KBM-7 (cell line): ENCODE measurements at regions of chr18 and their contacts with region 1.

Region 1: GRCh38 chr18:8654503-8655451 is 45.5 kb downstream of the RAB12 start:
- DNase-seq: peak; percentile 41

Region 2: DNA sequence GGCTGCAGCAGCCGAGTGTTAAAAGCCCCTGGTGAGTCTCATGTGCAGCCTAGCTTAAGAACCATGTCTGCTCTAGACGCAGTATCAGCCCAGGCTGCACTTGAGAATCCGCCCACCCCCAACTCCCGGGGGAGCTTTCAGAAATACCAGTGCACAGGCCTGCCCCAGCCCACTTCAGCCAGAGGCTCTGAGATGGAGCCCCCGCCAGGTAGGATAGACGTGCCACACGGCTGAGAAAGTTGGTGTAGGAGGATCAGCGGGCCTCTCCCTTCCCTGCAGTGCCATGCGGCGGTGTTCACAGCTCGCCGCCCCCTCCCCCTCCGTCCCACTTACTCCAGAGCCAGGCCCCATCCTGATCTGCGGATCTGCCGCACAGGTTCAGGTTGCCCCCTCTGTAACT is 254.5 kb before region 1 on chr18:
- in situ Hi-C with region 1: no loop called
- DNase-seq: no peak

Region 3: DNA sequence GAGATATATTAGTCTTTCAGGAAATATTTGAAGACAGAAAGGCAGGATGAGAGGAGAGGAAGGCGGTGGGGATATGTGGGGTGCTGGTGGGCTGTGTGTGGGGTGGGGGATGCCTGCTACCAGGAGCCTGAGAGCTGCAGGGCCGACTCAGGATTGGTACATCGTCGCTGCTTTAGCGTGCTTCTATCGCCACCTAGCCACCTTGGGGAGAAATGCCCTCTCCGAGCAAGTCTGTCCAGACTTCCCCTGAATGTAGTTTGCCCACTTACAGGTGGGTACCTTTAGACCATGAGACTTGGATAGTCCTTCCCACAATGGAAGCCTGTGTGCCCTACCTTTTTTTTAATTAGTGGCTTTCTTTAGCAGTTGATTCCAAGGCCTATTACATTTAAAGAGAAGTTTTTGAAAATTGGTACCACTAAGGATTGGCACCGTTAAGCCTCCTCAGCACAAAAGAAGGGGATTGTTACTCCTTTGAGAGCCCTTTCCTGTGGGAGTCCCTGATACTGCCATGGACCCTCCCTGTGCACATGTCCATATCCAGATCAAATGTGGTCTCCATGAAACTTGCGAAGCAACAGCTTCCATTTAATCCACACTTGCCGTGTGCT is 333.6 kb after region 1 on chr18:
- in situ Hi-C with region 1: loop called (anchors 25 kb)
- DNase-seq: peak; percentile 53

Region 4: DNA sequence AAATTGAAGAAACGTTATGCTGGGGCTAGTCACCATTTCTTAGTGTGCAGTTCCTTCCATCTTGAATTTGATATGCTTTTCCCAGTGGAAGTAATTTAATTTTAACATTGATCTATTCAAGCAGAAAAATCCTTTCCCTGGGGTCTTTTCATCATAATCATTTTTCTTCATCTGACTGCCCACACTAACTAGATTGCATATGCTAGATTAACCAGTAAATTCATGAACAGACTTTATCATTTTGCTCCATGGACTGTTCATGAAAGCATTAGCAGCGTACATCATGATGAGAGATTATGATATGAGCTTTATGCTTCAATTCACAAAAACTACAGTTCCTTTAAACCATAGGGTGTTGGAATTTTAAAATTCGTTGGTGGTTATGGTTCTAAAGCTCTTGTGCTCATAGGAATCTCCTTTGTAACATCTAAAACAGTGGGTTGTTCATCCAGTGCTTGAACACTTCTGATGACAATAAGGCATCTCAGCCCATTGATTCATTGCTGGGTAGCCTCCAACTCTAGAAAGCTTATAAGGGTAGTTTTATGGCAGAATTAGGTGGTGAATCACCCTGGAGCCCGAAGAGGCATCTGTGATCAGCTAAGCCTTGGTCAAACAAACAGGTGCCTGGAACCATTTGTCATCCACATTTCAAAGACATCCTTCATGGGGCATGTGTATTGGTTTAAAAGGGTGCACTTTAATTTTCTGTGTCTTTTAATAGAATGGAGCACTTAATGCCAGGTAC is 370.5 kb after region 1 on chr18:
- in situ Hi-C with region 1: no loop called
- DNase-seq: no peak